Activated CD8-positive, alpha-beta T cell treated with anti-CD3 and anti-CD28 coated beads for 36 hours (primary cell): ENCODE measurements at regions of chr17 and their contacts with region 1.

Region 1: GRCh38 chr17:77331301-77331864 is 190.6 kb downstream of the SEC14L1 start:
- DNase-seq: peak; percentile 98
- ATAC-seq: peak; percentile 88
- H3K4me3 Mint-ChIP-seq: peak overlapping the region; percentile 54
- H3K27ac Mint-ChIP-seq: peak overlapping the region; percentile 90
- H3K4me1 Mint-ChIP-seq: peaks cover 45% of the 10 kb centered on the region
- H3K27me3 Mint-ChIP-seq: no peaks in the 10 kb centered on the region
- CTCF ChIP-seq: peak; percentile 98

Region 2: GRCh38 chr17:77140166-77140878 is 191.1 kb before region 1 on chr17:
- CTCF ChIA-PET with region 1: no interaction called
- POLR2A ChIA-PET with region 1: no interaction called
- intact Hi-C with region 1: no loop called
- DNase-seq: peak; percentile 99
- ATAC-seq: peak; percentile 87
- H3K4me3 Mint-ChIP-seq: peak overlapping the region; percentile 72
- H3K27ac Mint-ChIP-seq: peak overlapping the region; percentile 97
- H3K4me1 Mint-ChIP-seq: peaks cover 48% of the 10 kb centered on the region
- H3K27me3 Mint-ChIP-seq: no peaks in the 10 kb centered on the region
- CTCF ChIP-seq: no peak

Region 3: GRCh38 chr17:77374170-77374936 is 43.0 kb after region 1 on chr17:
- CTCF ChIA-PET with region 1: interaction called, 10 read pairs
- POLR2A ChIA-PET with region 1: interaction called, 4 read pairs
- intact Hi-C with region 1: loop called (anchors 5 kb)
- DNase-seq: peak; percentile 89
- ATAC-seq: peak; percentile 78
- H3K4me3 Mint-ChIP-seq: peak overlapping the region; percentile 92
- H3K27ac Mint-ChIP-seq: peak overlapping the region; percentile 91
- H3K4me1 Mint-ChIP-seq: peaks cover 56% of the 10 kb centered on the region
- H3K27me3 Mint-ChIP-seq: no peaks in the 10 kb centered on the region
- CTCF ChIP-seq: peak; percentile 31

Region 4: GRCh38 chr17:77391668-77392375 is 60.4 kb after region 1 on chr17:
- CTCF ChIA-PET with region 1: interaction called, 15 read pairs
- POLR2A ChIA-PET with region 1: interaction called, 4 read pairs
- intact Hi-C with region 1: no loop called
- DNase-seq: peak; percentile 84
- ATAC-seq: peak; percentile 62
- H3K4me3 Mint-ChIP-seq: peak overlapping the region; percentile 81
- H3K27ac Mint-ChIP-seq: peak overlapping the region; percentile 85
- H3K4me1 Mint-ChIP-seq: peaks cover 68% of the 10 kb centered on the region
- H3K27me3 Mint-ChIP-seq: no peaks in the 10 kb centered on the region
- CTCF ChIP-seq: no peak

Region 5: DNA sequence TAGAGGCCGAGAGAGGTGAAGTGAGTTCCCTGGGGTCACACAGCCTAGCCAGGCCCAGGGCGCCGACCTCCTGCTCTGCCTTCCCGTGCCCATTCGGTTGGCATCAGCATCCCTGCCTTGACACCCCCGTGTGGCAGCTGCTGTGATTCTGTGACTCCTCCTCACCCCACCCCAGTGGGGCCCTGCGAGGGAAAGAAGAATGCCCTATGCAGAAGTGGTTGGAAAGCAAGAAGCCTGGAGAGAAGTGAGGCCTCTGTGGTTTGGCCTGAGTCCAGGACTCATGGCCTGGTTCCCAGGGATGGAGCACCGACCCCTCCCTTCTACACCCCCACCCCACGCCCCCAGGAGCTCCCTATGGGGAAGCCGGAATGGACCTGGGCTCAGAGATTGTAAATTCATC is 105.6 kb after region 1 on chr17:
- CTCF ChIA-PET with region 1: interaction called, 11 read pairs
- POLR2A ChIA-PET with region 1: interaction called, 5 read pairs
- intact Hi-C with region 1: loop called (anchors 5 kb)
- DNase-seq: no peak
- ATAC-seq: no peak
- H3K4me3 Mint-ChIP-seq: peak overlapping the region; percentile 89
- H3K27ac Mint-ChIP-seq: peak overlapping the region; percentile 91
- H3K4me1 Mint-ChIP-seq: peaks cover 85% of the 10 kb centered on the region
- H3K27me3 Mint-ChIP-seq: no peaks in the 10 kb centered on the region
- CTCF ChIP-seq: no peak

Region 6: DNA sequence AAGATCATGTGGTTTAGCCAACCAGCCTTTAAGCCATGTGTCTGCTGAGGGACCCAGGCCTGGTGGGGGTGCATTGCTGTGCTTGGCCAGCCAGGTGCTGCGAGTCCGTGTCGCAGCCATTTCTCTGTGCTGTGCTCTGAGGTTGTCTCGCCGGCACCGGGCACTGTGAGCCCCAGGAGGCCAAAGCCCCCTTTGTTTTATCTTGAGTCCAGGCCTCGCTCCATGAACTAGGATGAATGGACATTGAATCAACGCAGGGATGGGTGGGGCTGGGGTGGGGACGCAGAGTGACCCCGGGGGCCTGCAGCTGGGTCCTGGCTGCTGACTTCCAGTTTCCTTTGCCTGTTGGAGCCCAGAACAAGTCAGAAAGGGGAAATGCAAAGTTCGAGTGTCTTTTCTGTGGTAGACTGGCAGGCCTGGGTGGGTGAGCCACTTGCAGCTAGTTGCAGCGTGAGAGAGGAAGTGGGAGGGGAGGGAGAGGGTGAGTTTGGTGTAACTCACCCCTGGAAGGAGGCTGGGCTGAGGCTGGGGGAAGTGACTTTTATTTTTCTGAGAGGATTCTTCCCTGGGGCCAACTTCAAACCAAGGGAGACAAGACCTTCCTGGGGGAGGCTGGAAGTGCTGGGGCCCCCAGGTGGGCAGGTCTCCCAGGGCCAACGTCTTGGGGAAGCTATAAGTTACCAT is 134.1 kb after region 1 on chr17:
- CTCF ChIA-PET with region 1: interaction called, 3 read pairs
- POLR2A ChIA-PET with region 1: no interaction called
- intact Hi-C with region 1: loop called (anchors 5 kb)
- DNase-seq: peak; percentile 91
- ATAC-seq: peak; percentile 81
- H3K4me3 Mint-ChIP-seq: peak overlapping the region; percentile 60
- H3K27ac Mint-ChIP-seq: peak overlapping the region; percentile 89
- H3K4me1 Mint-ChIP-seq: peaks cover 82% of the 10 kb centered on the region
- H3K27me3 Mint-ChIP-seq: no peaks in the 10 kb centered on the region
- CTCF ChIP-seq: no peak